ENCODE measurements at regions of chr2 and their contacts with region 1.

Region 1: GRCh38 chr2:47016172-47016913 is 100.7 kb upstream of the MCFD2 start:
- DNase-seq: peak; percentile 93 to 95
- ATAC-seq: peak; percentile 88 to 89
- H3K4me3 ChIP-seq: no peak overlapping the region
- H3K27ac ChIP-seq: peak overlapping the region; percentile 85 to 90 (median 85)
- H3K4me1 ChIP-seq: peaks cover 32 to 48% of the 10 kb centered on the region in 2 donors
- H3K27me3 ChIP-seq: no peaks in the 10 kb centered on the region
- CTCF ChIP-seq: peak in 1 of 5 experiments; percentile 26
- POLR2A ChIP-seq: no peak

Region 2: GRCh38 chr2:46970334-46971288 is 45.7 kb before region 1 on chr2:
- in situ Hi-C with region 1: no loop called
- intact Hi-C with region 1: loop called (anchors 5 kb)
- DNase-seq: peak; percentile 84 to 94
- ATAC-seq: peak; percentile 75 to 86
- H3K4me3 ChIP-seq: no peak overlapping the region
- H3K27ac ChIP-seq: peak overlapping the region; percentile 71 to 90 (median 80)
- H3K4me1 ChIP-seq: peaks cover 23 to 43% of the 10 kb centered on the region in 2 donors
- H3K27me3 ChIP-seq: no peaks in the 10 kb centered on the region
- CTCF ChIP-seq: no peak
- POLR2A ChIP-seq: no peak

Region 3: DNA sequence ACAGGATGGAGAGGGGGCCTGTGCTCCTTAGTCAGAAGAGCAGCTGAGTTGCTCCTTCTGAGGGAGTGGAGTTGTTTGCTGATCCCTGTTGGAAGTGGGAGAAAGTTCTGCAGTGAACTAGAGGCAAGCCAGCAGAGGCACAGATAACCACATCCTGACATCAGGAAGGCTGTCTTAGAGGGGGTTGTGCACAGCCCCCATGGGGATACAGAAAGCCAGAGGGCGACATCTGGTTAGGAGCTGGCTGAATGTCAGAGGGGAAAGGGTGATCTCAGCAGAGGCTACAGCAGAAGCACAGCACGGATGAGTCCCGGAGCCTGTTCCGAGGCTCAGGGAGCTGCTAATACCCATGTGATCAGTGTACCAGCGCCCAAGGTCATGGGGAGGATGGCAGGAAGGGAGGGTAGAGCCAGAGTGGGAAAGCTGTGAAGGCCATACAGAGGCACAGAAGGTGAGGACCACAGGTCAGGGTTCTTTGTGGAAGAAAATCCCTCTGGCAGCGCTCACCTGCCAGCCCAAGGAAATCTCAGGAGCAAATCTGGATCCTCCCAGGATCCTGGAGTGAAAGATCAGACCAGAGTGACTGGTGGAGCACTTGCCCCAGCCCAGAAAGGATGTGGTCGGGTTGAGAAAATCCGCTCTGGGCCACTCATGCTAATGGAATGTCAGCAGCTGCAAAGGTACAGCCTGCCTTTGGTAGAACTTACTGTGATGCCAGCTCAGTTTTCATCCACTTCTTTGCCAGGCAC is 27.0 kb after region 1 on chr2:
- in situ Hi-C with region 1: no loop called
- intact Hi-C with region 1: loop called (anchors 2 kb)
- DNase-seq: peak; percentile 88 to 93
- ATAC-seq: peak; percentile 86
- H3K4me3 ChIP-seq: no peak overlapping the region
- H3K27ac ChIP-seq: peak overlapping the region; percentile 86 to 93 (median 92)
- H3K4me1 ChIP-seq: peaks cover 67 to 69% of the 10 kb centered on the region in 2 donors
- H3K27me3 ChIP-seq: no peaks in the 10 kb centered on the region
- CTCF ChIP-seq: peak in 1 of 5 experiments; percentile 15
- POLR2A ChIP-seq: peak; percentile 21 to 55

Region 4: GRCh38 chr2:47174733-47175361 is 158.5 kb after region 1 on chr2:
- in situ Hi-C with region 1: loop called in 1 of 4 experiments (anchors 25 kb)
- intact Hi-C with region 1: no loop called
- DNase-seq: peak; percentile 72 to 85
- ATAC-seq: peak; percentile 57 to 60
- H3K4me3 ChIP-seq: peak overlapping the region; percentile 80 to 96 (median 90)
- H3K27ac ChIP-seq: peak overlapping the region; percentile 96 to 100 (median 99)
- H3K4me1 ChIP-seq: peaks cover 49 to 53% of the 10 kb centered on the region in 2 donors
- H3K27me3 ChIP-seq: no peaks in the 10 kb centered on the region
- CTCF ChIP-seq: no peak
- POLR2A ChIP-seq: no peak

Region 5: DNA sequence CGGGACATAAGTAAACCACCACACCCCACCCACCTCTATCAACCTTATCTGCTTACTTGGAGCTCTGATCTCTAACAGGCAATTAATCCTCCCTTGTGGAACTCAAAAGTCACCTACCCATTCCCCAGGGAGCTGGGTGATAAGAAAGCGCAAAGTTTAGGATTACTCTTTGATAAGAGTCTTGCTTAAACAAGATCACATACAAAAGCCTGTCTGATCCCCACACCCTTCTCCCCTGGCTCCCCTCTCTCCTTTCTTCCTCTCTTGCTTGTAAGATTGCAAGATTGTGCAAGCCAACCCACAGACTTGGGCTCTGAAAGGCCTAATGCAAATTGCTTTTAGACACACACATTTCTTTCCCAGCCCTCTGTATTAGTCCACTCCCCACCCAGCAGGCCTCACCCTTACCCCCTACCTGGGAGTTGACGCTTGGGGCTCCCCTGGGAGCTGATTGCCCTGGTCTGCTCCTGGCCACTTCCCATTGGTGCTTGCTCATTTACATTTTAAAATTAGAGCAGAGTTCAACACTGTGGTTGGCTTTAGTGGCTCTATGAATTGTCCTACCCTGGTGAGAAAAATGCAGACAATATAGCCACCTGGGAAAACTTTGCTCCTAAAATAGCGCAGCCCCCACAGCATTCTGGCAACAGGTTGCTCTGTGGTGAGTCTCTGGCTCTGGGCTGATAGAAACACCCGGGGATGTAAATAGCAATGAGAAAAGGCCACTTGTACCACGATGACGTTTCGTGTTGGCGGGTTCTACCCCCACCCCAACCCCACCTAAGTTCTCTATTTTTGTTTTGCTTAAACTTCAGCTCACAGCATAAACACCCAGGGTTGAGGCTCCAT is 293.8 kb after region 1 on chr2:
- in situ Hi-C with region 1: no loop called
- intact Hi-C with region 1: loop called (anchors 10 kb)
- DNase-seq: no peak
- ATAC-seq: peak; percentile 40
- H3K4me3 ChIP-seq: no peak overlapping the region
- H3K27ac ChIP-seq: peak overlapping the region; percentile 9 to 58 (median 46)
- H3K4me1 ChIP-seq: peaks cover 8 to 11% of the 10 kb centered on the region in 2 donors
- H3K27me3 ChIP-seq: no peaks in the 10 kb centered on the region
- CTCF ChIP-seq: no peak
- POLR2A ChIP-seq: no peak